Activated CD4-positive, alpha-beta memory T cell treated with anti-CD3 and anti-CD28 coated beads, Interleukin-2, amount 10 ng/mL, durations not matched to agents 7 days and 5 days (primary cell): ENCODE measurements at regions of chr16 and their contacts with region 1.

Region 1: DNA sequence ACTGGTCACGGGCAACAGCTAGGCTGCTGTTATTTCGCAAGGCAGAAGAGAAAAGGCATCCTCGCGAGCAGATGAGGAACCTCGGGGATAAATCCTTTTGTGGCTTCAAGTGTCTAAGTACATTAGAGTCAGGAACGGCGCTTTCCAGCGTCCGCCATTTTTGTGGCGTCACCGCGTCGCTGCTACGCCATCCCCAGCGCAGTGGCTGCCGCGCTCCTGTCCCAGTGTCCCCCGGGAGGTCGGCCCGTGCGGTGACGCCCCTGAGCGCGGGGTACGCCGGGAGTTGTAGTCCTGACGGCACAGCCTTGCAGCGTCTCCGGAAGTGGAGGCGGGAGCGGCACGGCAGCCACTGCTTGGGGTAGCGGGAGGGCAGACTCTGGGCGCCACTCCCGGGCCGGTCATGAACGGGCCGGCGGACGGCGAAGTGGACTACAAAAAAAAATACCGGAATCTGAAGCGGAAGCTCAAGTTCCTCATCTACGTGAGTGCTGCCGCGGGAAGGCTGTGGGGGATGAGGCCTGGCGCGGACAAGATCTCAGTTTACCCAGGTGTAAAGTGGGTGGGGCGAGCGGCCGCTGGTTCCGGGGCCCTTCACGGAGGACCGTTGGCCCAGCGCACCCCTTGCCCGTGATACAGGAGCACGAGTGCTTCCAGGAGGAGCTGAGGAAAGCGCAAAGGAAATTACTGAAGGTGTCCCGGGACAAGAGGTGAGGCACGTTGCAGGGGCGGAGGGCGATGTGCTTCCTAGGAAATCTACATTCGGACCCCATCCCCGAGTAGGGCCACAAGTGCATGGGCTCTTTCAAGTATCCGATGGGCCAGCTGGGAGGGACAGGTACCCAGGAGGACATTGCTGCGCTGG is at the start of gene INO80E:
- DNase-seq: peak; percentile 100
- H3K4me3 Mint-ChIP-seq: peak within 1 kb of the TSS; percentile 94
- H3K27ac Mint-ChIP-seq: peak within 1 kb of the TSS; percentile 98
- H3K4me1 Mint-ChIP-seq: peaks cover 45% of the 10 kb centered on the region
- H3K27me3 Mint-ChIP-seq: no peaks in the 10 kb centered on the region
- total RNA-seq, gene INO80E: 102 to 107 TPM

Region 2: GRCh38 chr16:29712770-29713169 is 283.4 kb before region 1 on chr16:
- CTCF ChIA-PET with region 1: no interaction called
- POLR2A ChIA-PET with region 1: no interaction called
- DNase-seq: no peak
- H3K4me3 Mint-ChIP-seq: no peak overlapping the region
- H3K27ac Mint-ChIP-seq: no peak overlapping the region
- H3K4me1 Mint-ChIP-seq: peaks cover 14% of the 10 kb centered on the region
- H3K27me3 Mint-ChIP-seq: peaks cover 8% of the 10 kb centered on the region

Region 3: DNA sequence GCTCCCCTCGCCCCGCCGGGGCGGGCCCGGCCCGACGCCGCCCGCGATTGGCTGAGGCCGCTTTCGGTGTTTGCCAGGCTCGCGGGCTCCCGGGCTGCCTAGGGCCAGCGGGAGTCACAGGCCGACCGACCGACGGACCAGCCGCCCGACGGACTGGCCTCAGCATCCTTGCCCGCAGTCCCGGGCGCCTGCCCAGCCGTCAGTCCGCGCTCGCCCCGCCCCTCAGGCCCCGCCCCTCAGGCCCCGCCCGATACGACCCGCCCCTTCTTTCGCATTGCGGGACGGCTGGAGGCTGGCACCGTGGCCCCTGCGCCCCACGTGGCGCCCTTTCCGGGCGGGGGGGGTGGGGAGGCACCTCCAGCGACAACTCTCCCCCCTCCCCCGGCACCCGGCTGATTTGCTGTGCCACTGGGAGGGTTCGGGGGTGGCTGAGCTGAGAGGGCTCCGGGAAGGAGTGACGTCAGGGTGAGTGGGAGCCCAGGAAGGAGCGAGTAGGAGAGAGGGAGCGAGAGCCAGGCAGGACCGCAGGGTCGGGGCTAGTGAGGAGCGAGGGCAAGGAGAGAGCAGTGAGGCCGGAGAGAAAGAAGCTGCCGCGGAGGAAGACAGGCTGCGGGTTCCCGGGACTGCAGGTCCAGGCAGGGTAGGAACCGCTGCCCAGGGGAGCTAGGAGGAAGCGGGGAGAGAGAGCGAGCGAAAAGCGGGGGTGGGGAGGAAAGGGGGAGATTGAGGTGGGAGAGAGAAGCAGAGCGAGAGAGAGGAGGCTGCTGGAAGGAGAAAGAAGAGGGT is 95.8 kb before region 1 on chr16 and contains the start of gene ASPHD1:
- CTCF ChIA-PET with region 1: no interaction called
- POLR2A ChIA-PET with region 1: interaction called, 11 read pairs
- DNase-seq: peak; percentile 66
- H3K4me3 Mint-ChIP-seq: peak within 1 kb of the TSS; percentile 58
- H3K27ac Mint-ChIP-seq: no peak within 1 kb of the TSS
- H3K4me1 Mint-ChIP-seq: peaks cover 9% of the 10 kb centered on the region
- H3K27me3 Mint-ChIP-seq: peaks cover 21% of the 10 kb centered on the region
- total RNA-seq, gene ASPHD1: 0.15 TPM in 1 of 2 experiments, not detected in the other

Region 4: GRCh38 chr16:29926005-29926710 is 70.0 kb before region 1 on chr16 and contains the start of gene KCTD13:
- CTCF ChIA-PET with region 1: no interaction called
- POLR2A ChIA-PET with region 1: interaction called, 16 read pairs
- DNase-seq: peak; percentile 92
- H3K4me3 Mint-ChIP-seq: peak within 1 kb of the TSS; percentile 87
- H3K27ac Mint-ChIP-seq: peak within 1 kb of the TSS; percentile 87
- H3K4me1 Mint-ChIP-seq: peaks cover 36% of the 10 kb centered on the region
- H3K27me3 Mint-ChIP-seq: no peaks in the 10 kb centered on the region
- total RNA-seq, gene KCTD13: 34.5 to 36.0 TPM

Region 5: DNA sequence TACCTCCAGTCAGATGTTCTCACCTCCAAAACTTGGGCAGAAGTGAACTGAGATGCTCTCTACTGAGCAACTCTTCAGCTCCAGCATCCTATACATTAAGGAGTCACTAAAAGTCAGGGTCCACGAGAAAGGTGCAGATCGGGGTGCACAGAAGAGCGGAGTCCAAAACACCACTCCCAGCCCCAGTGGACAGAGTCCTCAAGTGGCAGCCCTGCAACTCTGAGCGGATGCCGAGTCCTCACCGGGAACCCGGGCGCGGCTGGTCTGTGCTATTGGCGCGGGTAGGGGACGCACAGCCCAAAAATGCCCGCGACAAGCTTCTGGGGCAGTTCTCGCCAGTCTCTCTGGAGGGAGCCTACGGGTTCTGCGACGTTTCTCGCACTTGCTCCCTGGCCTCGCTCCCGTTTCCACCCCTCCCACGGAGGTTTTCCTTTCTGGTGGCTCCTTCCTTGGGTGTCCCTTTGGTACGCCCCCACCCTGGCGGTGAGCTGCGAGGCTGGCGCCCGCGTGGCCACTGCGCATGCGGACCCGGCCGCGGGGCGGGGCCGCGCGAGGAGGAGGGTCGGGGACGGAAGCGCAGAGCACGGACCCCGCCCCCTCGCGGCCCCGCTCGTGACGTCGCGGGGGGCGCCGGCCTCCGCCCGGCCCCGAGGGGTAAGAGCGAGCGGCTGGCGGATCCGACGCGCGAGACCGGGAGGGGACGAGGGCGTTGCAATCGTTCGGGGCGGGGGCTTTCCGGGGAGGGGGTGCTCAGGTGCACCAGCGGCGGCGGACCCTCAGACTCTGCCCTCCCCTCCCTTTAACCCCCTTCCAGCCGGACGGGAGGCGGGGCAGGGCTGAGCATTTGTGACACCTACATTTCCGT is 34.4 kb before region 1 on chr16 and contains the start of gene TMEM219:
- CTCF ChIA-PET with region 1: interaction called, 3 read pairs
- POLR2A ChIA-PET with region 1: interaction called, 20 read pairs
- DNase-seq: peak; percentile 94
- H3K4me3 Mint-ChIP-seq: peak within 1 kb of the TSS; percentile 87
- H3K27ac Mint-ChIP-seq: peak within 1 kb of the TSS; percentile 82
- H3K4me1 Mint-ChIP-seq: peaks cover 25% of the 10 kb centered on the region
- H3K27me3 Mint-ChIP-seq: no peaks in the 10 kb centered on the region
- total RNA-seq, gene TMEM219: 68.9 to 78.7 TPM

Region 6: GRCh38 chr16:29973384-29974246 is 22.5 kb before region 1 on chr16 and contains the start of gene TAOK2:
- CTCF ChIA-PET with region 1: no interaction called
- POLR2A ChIA-PET with region 1: interaction called, 99 read pairs
- DNase-seq: peak; percentile 97
- H3K4me3 Mint-ChIP-seq: peak within 1 kb of the TSS; percentile 88
- H3K27ac Mint-ChIP-seq: peak within 1 kb of the TSS; percentile 79
- H3K4me1 Mint-ChIP-seq: peaks cover 37% of the 10 kb centered on the region
- H3K27me3 Mint-ChIP-seq: no peaks in the 10 kb centered on the region
- total RNA-seq, gene TAOK2: 44.2 TPM

Region 7: DNA sequence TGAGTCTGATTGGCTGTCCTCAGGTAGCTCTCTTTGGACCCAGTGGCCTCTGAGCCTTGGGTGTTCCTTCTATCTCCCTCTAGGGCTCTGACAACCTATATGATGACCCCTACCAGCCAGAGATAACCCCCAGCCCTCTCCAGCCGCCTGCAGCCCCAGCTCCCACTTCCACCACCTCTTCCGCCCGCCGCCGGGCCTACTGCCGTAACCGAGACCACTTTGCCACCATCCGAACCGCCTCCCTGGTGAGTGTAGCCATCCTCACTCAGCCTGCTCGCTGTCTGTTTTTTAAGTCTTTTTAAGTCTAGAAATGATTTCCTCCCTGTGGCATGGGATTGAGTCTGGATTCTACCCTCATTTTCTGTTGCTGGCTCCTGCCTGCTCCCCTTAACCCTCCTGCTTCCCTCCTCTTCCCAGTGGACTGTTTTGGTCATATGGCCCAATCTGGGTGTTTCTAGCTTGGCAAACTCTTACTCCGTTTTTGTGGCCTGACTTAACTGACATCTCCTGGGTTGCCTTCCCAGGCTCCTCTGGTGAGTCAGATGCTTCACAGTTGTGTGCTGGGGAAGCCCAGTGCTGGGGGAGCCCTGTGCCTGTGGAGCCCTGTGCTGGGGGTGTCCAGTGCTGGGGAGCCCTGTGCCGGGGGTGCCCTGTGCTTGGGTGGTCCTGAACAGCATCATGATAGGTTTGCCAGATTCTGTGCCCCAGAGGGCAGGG is 12.6 kb before region 1 on chr16:
- CTCF ChIA-PET with region 1: no interaction called
- POLR2A ChIA-PET with region 1: interaction called, 99 read pairs
- DNase-seq: no peak
- H3K4me3 Mint-ChIP-seq: no peak overlapping the region
- H3K27ac Mint-ChIP-seq: no peak overlapping the region
- H3K4me1 Mint-ChIP-seq: no peaks in the 10 kb centered on the region
- H3K27me3 Mint-ChIP-seq: no peaks in the 10 kb centered on the region

Region 8: GRCh38 chr16:30065143-30065850 is 69.2 kb after region 1 on chr16 and contains the start of gene ALDOA:
- CTCF ChIA-PET with region 1: no interaction called
- POLR2A ChIA-PET with region 1: interaction called, 26 read pairs
- DNase-seq: peak; percentile 97
- H3K4me3 Mint-ChIP-seq: peak within 1 kb of the TSS; percentile 95
- H3K27ac Mint-ChIP-seq: peak within 1 kb of the TSS; percentile 99
- H3K4me1 Mint-ChIP-seq: peaks cover 36% of the 10 kb centered on the region
- H3K27me3 Mint-ChIP-seq: no peaks in the 10 kb centered on the region
- total RNA-seq, gene ALDOA: 1,403 to 1,450 TPM

Region 9: DNA sequence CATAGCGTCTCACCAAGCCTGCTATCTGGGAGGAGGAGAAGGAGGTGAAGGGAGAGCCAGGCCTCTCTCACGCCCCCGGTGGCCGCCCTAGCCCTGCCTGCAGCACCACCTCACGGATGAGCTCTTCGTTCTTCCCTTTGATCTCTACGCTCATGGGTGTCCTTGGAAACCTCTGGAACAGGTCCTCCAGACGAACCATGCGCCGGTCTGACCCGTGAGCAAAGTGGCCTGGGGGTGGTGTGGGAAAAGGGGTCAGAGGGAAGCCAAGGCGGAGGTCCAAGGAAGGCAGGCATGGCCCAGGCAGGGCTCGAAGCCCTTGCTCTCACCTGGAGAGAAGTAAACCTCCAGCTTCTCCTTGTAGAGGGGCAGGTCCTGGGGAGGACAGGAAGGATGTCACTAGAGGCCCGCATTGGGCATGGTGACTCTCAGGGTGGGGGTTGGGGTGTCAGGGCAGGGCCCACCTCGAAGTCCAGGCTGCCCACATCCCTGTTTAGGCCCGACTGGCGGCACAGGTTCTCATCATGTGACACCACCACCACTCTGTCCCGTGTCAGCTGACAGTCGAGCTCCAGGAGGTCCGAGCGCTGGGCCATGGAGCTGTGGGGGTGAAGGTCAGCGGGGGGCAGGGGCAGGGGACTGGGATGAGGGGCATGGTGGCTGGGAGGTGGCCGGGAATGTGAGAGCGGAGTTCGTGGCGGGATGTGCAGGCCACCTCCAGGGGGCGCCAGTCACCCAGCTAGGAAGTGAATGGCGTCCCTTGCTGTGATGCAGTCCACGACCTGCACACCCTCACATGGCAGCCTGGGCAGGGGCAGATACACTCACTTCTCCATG is 116.3 kb after region 1 on chr16:
- CTCF ChIA-PET with region 1: no interaction called
- POLR2A ChIA-PET with region 1: no interaction called
- DNase-seq: peak; percentile 71
- H3K4me3 Mint-ChIP-seq: no peak overlapping the region
- H3K27ac Mint-ChIP-seq: peak overlapping the region; percentile 26
- H3K4me1 Mint-ChIP-seq: peaks cover 16% of the 10 kb centered on the region
- H3K27me3 Mint-ChIP-seq: no peaks in the 10 kb centered on the region